Posterior cingulate gyrus (tissue), 11 donors: ENCODE measurements at regions of chr13 and their contacts with region 1.

Region 1: GRCh38 chr13:26985285-26985878 is 186.2 kb downstream of the USP12 start:
- DNase-seq: peak in 6 of 10 donors; percentile 44 to 89 (median 70)

Region 2: GRCh38 chr13:26946684-26947343 is 38.6 kb before region 1 on chr13:
- intact Hi-C with region 1: loop called (anchors 5 kb)
- DNase-seq: no peak

Region 3: GRCh38 chr13:27043013-27043412 is 57.6 kb after region 1 on chr13:
- intact Hi-C with region 1: loop called (anchors 5 kb)
- DNase-seq: peak; percentile 39 to 94 (median 64)

Region 4: DNA sequence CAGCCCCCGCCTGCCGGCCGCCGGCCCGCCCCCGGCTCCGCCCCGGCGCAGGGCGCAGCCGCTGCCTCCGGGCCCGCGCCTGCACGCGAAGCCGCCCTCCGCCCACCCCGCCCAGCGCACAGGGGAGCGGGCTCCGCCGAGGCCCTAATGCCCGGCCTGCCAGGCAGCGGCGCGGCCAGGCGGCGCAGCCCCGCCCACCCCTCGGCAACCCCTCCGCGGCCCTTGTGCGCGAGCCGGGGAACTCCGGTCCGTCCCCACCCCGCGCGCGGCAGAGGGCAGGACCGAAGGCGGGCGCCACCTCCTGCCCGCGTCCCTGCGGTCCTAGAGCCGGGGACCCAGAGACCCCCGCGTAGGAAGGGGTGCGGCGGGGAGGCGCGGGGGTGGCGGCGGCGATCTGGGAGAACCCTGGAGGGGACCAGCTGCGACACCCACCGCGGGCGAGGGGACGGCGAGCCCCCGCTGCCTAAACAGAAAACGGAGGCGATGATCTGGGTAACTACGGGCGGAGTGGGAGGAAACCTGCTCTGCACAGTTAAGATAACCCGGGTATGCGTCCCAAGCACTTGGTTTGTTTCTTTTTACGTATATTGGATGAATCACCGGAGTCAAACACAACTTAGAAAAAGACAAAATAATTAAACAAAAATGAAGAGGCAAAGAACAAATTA is 186.6 kb after region 1 on chr13:
- intact Hi-C with region 1: loop called (anchors 5 kb)
- DNase-seq: peak; percentile 78 to 98 (median 87)

Region 5: DNA sequence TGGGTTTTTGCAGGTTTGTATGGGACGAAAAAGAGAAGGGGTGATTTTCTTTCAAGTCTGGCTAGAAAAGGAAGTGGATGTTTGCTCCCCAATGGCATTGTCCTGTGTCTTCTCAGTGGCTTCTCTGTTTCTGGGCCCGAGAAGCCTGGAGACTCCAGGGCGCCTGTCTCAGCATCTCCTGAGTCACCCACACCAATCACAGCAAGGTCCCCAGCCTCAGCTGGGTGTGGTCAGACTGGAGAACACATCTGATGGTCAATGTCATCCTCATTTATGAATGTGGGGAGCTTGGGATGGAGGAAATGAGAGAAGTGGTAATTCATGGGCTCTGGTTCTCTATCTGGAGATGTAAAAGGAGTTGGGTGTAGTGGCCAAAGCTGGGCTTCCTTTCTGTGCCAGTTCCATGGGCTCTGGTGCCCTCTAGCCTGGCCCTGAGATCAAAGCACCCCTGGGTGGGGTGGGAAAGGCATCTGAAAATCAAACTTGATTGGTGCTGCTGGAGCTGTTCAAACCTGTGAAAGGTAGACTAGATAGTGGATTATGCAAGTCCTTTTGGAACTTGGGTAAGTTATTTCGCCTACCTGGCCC is 298.6 kb after region 1 on chr13:
- intact Hi-C with region 1: loop called (anchors 5 kb)
- DNase-seq: peak in 4 of 10 donors; percentile 27 to 91 (median 68)

Region 6: DNA sequence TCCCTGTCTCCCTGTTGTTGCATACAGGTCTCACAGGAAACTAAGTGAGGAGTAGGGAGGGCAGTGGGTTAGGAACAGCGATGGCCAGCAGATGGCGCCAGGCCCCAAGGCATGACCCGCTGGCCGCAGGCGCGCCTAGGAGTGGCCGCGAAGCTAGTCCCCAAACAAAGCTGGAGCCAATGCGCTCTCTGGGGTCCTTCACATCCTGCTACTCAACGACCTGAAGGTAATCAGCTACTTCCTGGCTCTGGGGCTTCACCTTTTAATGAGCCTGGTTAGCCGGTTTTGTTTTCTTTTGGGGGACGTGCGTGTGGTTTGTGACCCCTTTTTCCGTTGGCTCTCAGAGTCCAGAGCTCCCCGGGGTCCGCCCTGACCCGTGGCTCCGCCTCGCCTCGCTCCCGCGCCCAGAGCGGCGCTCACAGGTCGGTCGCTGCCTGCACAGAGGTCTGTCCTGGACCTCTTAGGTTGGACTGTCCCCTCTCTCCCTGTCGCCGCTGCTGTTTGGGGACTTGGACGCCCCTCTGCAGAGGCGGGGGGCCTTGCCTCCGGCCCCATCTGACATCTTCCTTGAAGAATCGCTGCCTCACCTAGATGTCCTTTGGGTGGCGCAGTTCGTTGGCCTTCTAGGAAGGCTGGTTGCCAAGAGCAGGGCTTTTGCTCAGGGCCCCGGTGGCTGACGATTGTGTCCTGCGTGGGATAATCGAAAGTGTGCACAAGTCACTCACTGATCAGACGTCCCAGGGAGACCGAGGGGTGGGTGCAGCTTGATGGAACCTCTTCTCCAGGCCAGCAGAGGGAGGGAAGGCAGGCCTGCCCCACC is 376.9 kb after region 1 on chr13:
- intact Hi-C with region 1: loop called (anchors 1 kb)
- DNase-seq: peak; percentile 73 to 97 (median 86)

Region 7: DNA sequence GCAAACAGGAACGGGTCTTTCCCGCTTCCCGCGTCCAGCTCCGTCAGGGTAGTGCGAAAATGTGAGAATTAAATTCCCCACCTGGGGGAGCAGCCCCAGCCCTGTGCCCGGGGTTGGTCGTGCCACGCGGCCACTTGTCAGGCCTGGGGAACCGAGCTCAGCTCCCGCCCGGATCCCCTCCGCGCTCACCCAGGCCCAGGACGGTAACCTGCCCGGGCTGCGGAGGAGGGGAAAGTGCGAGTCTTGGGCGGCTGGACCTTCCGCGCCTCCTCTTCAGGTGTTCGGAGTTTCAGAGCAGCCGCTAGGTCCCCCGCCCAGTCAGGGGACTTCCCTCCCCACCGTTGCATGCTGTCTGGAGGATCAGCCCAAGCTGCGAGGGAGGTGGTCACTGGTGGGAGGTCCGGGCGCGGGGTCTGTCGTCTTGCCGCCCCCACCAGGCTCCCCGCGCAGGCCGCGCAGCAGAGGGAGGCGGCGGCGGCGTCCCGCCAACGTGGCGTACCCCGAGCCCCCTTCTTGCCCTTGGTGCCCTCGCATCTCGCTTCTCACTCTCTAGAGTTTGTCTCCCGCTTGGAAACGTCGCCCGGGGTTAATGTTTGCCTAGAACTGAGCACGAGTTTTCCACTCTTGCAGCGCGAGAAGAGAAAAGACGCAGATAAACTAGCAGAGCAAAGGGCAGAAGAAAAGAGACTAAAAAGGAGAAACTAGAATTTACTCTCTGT is 995.1 kb after region 1 on chr13:
- intact Hi-C with region 1: loop called (anchors 10 kb)
- DNase-seq: peak in 1 of 10 donors; percentile 74